ENCODE measurements at regions of chr5 and their contacts with region 1.

Region 1: DNA sequence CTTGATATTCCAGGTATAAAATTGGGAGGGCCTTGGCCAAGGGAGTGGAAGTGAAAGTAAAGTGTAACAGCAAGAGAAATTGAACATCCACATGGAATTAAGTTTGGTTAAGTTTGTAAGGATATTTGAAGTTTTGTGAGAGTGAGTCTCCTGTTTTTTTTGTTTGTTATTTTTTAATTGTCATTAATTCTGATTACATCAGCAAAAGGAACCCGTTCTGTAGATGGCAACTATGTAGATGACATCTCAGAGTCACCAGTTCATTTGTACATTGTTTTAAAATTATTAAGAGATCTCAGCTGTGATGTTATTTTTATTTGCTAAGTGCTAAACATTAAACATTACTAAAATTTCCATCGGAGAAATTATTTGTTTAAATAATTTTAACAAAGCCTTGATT is 65.2 kb downstream of the XRCC4 start:
- DNase-seq: no peak

Region 2: DNA sequence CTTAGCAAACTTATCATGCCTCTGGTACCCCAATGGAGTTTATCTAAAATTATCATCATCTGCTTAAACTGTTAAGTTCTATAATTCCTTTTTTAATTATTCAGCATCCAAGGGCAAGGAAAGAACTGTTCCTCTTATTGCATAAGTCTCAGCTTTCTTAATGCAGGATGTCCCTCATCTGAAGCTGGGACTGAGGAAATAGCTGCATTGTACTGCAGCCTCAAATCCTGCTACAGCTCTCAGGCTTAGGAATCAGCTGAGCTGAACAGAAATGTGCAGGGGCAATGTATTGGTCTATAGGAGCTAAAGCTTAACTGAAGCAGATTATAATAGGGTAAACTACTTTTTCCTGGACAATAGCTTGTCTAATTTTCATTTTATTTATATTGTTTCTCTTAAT is 530.1 kb after region 1 on chr5:
- intact Hi-C with region 1: loop called in 1 of 2 experiments (anchors 5 kb)
- DNase-seq: no peak